ENCODE measurements at regions of chr4 and their contacts with region 1.

Region 1: GRCh38 chr4:103207673-103208072 is 9.5 kb upstream of the CENPE start:
- DNase-seq: no peak
- H3K4me3 ChIP-seq: no peak overlapping the region
- H3K27ac ChIP-seq: no peak overlapping the region
- H3K4me1 ChIP-seq: no peaks in the 10 kb centered on the region
- H3K27me3 ChIP-seq: no peaks in the 10 kb centered on the region
- CTCF ChIP-seq: no peak
- POLR2A ChIP-seq: no peak

Region 2: DNA sequence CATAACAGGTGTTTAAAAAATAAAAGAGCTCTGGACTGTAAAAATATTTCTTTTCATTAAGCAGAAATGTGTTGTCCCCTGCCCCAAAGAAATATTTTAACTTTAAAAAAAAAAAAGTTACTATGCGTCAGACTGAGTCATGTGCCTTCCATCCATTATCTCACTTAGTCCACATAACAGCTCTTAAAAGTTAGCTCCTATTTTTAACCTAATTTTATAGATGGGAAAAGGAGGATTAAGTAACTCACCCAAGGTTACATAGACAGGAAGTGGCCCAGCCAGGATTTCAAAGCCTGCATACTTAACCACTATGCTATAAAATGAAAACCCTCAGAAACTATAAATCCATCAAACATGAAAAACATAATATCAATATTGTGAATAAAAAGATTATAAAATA is 544.6 kb before region 1 on chr4:
- intact Hi-C with region 1: no loop called
- DNase-seq: no peak
- H3K4me3 ChIP-seq: no peak overlapping the region
- H3K27ac ChIP-seq: no peak overlapping the region
- H3K4me1 ChIP-seq: no peaks in the 10 kb centered on the region
- H3K27me3 ChIP-seq: no peaks in the 10 kb centered on the region
- CTCF ChIP-seq: no peak
- POLR2A ChIP-seq: no peak

Region 3: GRCh38 chr4:103150677-103151076 is 57.0 kb before region 1 on chr4:
- intact Hi-C with region 1: no loop called
- DNase-seq: no peak
- H3K4me3 ChIP-seq: no peak overlapping the region
- H3K27ac ChIP-seq: no peak overlapping the region
- H3K4me1 ChIP-seq: no peaks in the 10 kb centered on the region
- H3K27me3 ChIP-seq: no peaks in the 10 kb centered on the region
- CTCF ChIP-seq: no peak
- POLR2A ChIP-seq: no peak

Region 4: DNA sequence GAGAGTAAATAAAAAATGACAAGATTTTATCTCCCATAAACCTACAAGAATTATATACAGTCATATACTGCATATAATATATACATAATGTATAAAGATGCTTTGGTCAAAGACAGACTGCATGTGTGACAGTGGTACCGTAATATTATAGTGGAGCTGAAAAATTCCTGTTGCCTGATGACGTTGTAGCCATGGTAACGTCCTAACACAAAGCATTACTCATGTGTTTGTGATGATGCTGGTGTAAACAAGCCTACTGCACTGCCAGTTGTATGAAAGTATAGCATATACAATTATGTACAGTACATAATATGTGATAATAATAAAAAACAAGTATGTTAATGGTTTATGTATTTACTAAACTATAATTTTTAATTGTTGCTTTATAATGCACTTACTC is 235.7 kb after region 1 on chr4:
- intact Hi-C with region 1: loop called (anchors 10 kb)
- DNase-seq: no peak
- H3K4me3 ChIP-seq: no peak overlapping the region
- H3K27ac ChIP-seq: no peak overlapping the region
- H3K4me1 ChIP-seq: no peaks in the 10 kb centered on the region
- H3K27me3 ChIP-seq: no peaks in the 10 kb centered on the region
- CTCF ChIP-seq: no peak
- POLR2A ChIP-seq: no peak

Measured in vagina (tissue), 2 donors.